K562 (cell line): ENCODE measurements at regions of chr7 and their contacts with region 1.

Region 1: GRCh38 chr7:140517546-140518369 is 38.5 kb upstream of the MKRN1 start:
- DNase-seq: peak; percentile 90 to 96 (median 95)
- ATAC-seq: peak; percentile 97
- H3K4me3 ChIP-seq: no peak overlapping the region
- H3K27ac ChIP-seq: no peak overlapping the region
- H3K4me1 ChIP-seq: peaks cover 4 to 17% of the 10 kb centered on the region in 2 experiments; a peak in 4 of 5 replicates
- H3K27me3 ChIP-seq: peaks cover 0 to 5% of the 10 kb centered on the region in 2 experiments; a peak in 1 of 5 replicates
- CTCF ChIP-seq: peak; percentile 96 to 99 (median 98)
- EP300 ChIP-seq: peak; percentile 28; the same call in 1 of the 2 replicates
- POLR2A ChIP-seq: no peak
- RAD21 ChIP-seq: peak; percentile 95 to 99

Region 2: DNA sequence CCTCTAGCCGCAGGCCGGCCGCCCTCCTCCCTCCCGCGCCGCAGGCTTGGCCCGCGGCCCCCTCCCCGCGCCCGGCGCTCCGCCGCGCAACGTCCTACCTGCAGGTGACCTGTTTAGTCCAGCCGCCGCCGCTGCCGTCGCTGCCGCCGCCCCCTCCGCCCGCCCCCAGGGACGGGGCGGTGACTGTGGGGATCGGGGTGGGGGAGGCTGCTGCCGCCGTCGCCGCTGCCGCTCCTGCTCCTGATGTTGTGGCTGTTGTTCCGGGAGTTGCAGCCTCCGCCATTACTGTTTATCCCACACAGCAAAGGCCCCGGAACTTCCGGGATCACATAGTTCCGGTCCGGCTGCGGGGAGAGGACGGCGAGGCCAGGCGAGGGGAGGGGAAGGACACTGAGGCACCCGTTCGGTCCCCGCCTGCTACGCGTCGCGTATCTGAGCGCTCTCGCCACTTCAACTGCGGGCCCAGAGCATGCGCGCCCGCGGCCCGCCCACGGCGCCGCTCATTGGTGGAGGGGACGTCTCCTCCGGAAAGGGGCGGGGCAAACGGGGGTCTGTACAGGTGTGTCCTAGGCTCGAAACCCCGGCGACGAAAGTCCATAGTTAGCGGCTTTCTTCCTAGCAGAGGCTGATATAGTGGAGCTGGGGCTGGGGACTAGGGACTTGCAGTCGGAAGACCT is 38.6 kb before region 1 on chr7 and contains the start of gene MKRN1:
- CTCF ChIA-PET with region 1: interaction called, 4 read pairs
- POLR2A ChIA-PET with region 1: interaction called, 5 read pairs
- in situ Hi-C with region 1: no loop called
- intact Hi-C with region 1: loop called (anchors 1 kb)
- DNase-seq: peak; percentile 99 to 100 (median 100)
- ATAC-seq: peak; percentile 94
- H3K4me3 ChIP-seq: peak within 1 kb of the TSS; percentile 93
- H3K27ac ChIP-seq: peak within 1 kb of the TSS; percentile 91
- H3K4me1 ChIP-seq: peaks cover 12 to 35% of the 10 kb centered on the region in 2 experiments
- H3K27me3 ChIP-seq: no peaks in the 10 kb centered on the region
- CTCF ChIP-seq: no peak; a peak in 1 of 6 replicates
- EP300 ChIP-seq: no peak
- POLR2A ChIP-seq: peak; percentile 94
- RAD21 ChIP-seq: no peak; a peak in 1 of 4 replicates
- polyA plus RNA-seq, gene MKRN1: 30.5 to 33.5 TPM

Region 3: DNA sequence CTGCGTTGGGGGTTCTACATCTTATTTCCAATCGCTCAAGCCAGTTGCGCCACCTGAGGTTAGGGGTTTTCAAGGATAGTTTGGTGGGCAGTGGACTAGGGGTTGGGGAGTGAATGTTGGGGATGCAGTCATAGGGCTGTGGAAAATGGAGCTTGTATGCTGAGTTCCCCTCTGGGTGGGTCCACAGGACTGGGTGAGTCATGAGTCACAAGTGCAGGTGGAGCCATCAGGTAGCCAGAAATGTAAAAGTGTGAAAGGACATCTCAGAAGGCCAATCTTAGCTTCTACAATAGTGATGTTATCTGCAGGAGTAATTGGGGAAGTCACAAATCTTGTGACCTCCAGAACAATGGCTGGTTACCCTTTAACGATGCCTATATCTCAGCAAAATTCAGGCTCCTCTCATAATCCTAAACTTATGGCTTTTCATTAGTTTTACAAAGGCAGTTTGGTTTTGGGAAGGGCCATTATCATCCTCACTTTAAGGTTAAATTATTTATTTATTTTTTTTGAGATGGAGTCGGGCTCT is 20.5 kb before region 1 on chr7:
- CTCF ChIA-PET with region 1: no interaction called
- POLR2A ChIA-PET with region 1: no interaction called
- in situ Hi-C with region 1: no loop called
- intact Hi-C with region 1: no loop called
- DNase-seq: peak in 1 of 4 experiments; percentile 8
- ATAC-seq: no peak
- H3K4me3 ChIP-seq: no peak overlapping the region
- H3K27ac ChIP-seq: no peak overlapping the region
- H3K4me1 ChIP-seq: peaks cover 4 to 8% of the 10 kb centered on the region in 2 experiments; a peak in 4 of 5 replicates
- H3K27me3 ChIP-seq: no peaks in the 10 kb centered on the region
- CTCF ChIP-seq: no peak
- EP300 ChIP-seq: no peak
- POLR2A ChIP-seq: no peak
- RAD21 ChIP-seq: no peak

Region 4: DNA sequence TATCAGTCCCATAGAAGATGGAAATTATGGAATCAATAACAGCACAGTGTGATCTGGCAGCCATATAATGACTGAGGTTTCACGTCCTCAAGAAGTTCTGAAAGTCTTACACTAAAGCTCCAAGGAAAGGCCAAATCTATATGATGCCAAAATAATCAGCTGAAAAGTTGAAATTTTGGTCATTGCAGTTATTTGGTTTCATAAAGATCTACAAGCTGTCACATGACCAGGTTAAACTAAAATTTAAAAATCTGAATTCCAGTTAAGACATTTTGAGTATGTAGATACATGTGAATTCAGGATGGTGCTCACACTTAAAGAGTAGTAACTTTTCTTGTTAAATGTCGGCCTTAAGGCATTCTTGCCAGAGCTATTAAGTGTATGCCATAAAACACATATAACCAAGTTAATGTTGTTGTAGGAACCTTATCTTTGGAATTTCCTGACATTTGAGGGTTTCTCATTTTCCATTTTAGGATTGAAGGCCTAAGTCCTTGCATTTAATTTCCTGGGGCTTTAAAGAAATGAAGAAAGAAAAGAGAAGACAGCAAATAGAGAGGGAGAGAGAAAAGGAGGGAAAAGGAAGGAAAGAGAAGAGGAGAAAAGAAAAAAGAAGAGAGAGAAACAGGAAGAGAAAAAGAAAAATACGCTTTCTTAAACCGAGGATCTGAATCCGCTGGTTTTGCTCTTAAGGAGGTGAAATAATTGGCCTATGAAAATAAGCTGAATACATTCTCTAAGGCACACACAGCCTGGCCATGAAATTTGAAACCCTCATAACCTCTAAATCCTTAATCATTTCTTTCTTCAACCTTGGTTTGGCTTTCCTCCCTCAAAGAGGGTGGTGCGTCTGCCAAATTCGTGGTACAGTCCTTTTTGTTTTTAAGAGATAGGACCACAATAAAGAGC is 79.0 kb after region 1 on chr7:
- CTCF ChIA-PET with region 1: no interaction called
- POLR2A ChIA-PET with region 1: no interaction called
- in situ Hi-C with region 1: no loop called
- intact Hi-C with region 1: loop called (anchors 5 kb)
- DNase-seq: no peak
- ATAC-seq: no peak
- H3K4me3 ChIP-seq: no peak overlapping the region
- H3K27ac ChIP-seq: no peak overlapping the region
- H3K4me1 ChIP-seq: no peaks in the 10 kb centered on the region
- H3K27me3 ChIP-seq: peaks cover 46 to 57% of the 10 kb centered on the region in 2 experiments
- CTCF ChIP-seq: no peak
- EP300 ChIP-seq: no peak
- POLR2A ChIP-seq: no peak
- RAD21 ChIP-seq: no peak

Region 5: GRCh38 chr7:140653319-140654108 is 135.8 kb after region 1 on chr7:
- CTCF ChIA-PET with region 1: interaction called, 31 read pairs
- POLR2A ChIA-PET with region 1: no interaction called
- in situ Hi-C with region 1: loop called (anchors 5 kb)
- intact Hi-C with region 1: loop called (anchors 1 kb)
- DNase-seq: peak; percentile 77 to 84 (median 81)
- ATAC-seq: peak; percentile 83
- H3K4me3 ChIP-seq: no peak overlapping the region
- H3K27ac ChIP-seq: no peak overlapping the region
- H3K4me1 ChIP-seq: no peaks in the 10 kb centered on the region; a peak in 2 of 5 replicates
- H3K27me3 ChIP-seq: peaks cover 50 to 84% of the 10 kb centered on the region in 2 experiments; a peak in 4 of 5 replicates
- CTCF ChIP-seq: peak; percentile 87 to 98 (median 96)
- EP300 ChIP-seq: 0 out of 2 replicates have a peak, but pooled peaks have one; percentile 9
- POLR2A ChIP-seq: no peak
- RAD21 ChIP-seq: peak; percentile 95 to 96

Region 6: DNA sequence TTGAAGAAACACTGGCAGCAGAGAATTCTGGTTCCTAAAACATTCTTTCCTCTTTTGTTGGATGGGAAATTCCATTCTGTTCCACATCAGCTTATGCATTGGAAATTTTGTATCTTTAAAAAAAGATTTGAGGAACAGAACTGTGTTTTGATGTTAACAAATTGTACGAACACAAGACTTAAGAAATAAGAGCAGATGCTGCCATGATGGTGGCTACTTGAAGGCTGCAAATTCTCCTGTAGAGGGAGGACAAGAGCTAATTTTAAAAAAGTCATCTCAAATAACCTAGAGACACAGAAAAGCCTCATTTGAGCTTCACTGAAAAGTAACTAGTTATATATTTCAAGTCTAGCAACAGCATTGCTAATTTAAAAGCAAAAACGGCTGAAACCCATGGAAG is 208.5 kb after region 1 on chr7:
- CTCF ChIA-PET with region 1: no interaction called
- POLR2A ChIA-PET with region 1: no interaction called
- in situ Hi-C with region 1: no loop called
- intact Hi-C with region 1: no loop called
- DNase-seq: peak in 2 of 4 experiments; percentile 25 to 32
- ATAC-seq: peak; percentile 80
- H3K4me3 ChIP-seq: no peak overlapping the region
- H3K27ac ChIP-seq: no peak overlapping the region
- H3K4me1 ChIP-seq: no peaks in the 10 kb centered on the region
- H3K27me3 ChIP-seq: no peaks in the 10 kb centered on the region
- CTCF ChIP-seq: peak; percentile 16 to 61 (median 57); a peak in 5 of 6 replicates
- EP300 ChIP-seq: no peak
- POLR2A ChIP-seq: no peak
- RAD21 ChIP-seq: peak; percentile 18 to 49; a peak in 2 of 4 replicates

Region 7: DNA sequence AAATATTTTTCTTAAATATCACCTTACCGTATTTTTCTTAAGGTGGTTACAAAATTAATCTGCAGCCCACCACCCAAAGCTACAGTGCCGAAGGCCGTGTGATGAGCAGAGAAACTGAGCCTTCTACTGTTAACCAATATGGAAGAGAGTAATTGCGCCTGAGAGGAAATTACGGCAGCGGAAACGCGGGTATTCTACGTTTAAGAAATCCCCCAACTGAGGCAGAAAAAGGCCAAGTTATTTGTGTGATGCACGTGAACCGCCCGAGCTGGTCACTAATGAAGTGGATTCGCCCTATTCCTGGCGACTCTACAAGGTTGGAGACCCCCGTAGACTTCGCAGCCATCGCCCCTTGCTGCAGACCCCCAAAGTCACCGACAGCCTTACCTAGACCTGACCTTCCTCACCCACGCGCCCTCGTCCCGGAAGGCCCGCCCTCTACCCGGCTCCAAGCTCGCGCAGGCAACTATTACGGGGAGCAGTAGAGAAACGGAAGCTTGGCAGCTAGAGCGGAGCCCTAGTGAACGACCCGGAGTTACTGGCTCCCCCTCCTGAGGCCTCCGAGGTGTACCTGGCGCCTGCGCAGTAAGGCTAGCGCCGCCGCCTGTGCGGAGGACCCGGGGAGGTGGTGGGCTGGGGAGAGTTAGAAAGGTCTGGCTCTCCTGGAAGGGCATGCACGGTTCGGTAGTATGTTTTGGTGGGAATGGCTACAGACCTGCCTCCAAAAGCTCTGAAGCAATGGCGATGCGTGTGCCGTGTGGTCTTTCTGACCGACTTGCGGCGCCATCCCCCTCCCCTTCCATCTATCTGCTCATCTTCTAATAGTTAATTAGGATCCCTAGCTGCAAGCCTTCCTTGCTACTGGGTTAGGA is 497.0 kb after region 1 on chr7 and contains the start of gene MRPS33:
- CTCF ChIA-PET with region 1: interaction called, 6 read pairs
- POLR2A ChIA-PET with region 1: interaction called, 3 read pairs
- in situ Hi-C with region 1: no loop called
- intact Hi-C with region 1: loop called (anchors 2 kb)
- DNase-seq: peak; percentile 99
- ATAC-seq: peak; percentile 99
- H3K4me3 ChIP-seq: peak within 1 kb of the TSS; percentile 53
- H3K27ac ChIP-seq: peak within 1 kb of the TSS; percentile 80
- H3K4me1 ChIP-seq: peaks cover 8 to 21% of the 10 kb centered on the region in 2 experiments; a peak in 2 of 5 replicates
- H3K27me3 ChIP-seq: peaks cover 0 to 2% of the 10 kb centered on the region in 2 experiments; a peak in 1 of 5 replicates
- CTCF ChIP-seq: peak; percentile 92 to 96 (median 96)
- EP300 ChIP-seq: peak; percentile 72
- POLR2A ChIP-seq: peak; percentile 99
- RAD21 ChIP-seq: peak in 1 of 2 experiments; percentile 24; a peak in 1 of 4 replicates
- polyA plus RNA-seq, gene MRPS33: 395 to 442 TPM